CD4-positive, alpha-beta T cell (primary cell): ENCODE measurements at regions of chr19 and their contacts with region 1.

Region 1: DNA sequence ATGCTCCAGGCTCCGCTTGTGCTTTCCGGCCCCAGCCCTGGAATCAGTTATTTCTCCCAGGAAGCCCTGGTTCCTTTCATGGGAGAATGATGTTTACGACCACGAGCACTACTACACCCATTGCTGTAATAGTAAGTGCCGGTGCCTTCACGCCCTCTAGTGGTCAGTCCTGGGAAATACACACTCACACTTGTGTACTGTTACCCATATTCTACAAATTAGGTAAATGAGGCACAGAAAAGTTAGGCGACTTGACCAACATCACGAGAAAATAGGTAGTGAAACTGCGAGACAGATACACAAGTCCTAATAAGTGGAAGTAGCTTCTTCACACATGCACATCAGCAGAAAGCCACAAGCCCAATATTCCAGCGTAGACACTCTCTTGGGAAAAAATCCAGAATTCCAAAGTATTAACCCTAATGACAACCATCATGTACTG is 21.7 kb downstream of the CEACAM21 start:
- DNase-seq: peak; percentile 50 to 87 (median 68)
- ATAC-seq: peak; percentile 87
- H3K4me3 ChIP-seq: no peak overlapping the region
- H3K4me3 Mint-ChIP-seq: no peak overlapping the region
- H3K27ac ChIP-seq: no peak overlapping the region
- H3K27ac Mint-ChIP-seq: no peak overlapping the region
- H3K4me1 ChIP-seq: peaks cover 4% of the 10 kb centered on the region
- H3K4me1 Mint-ChIP-seq: peaks cover 12% of the 10 kb centered on the region
- H3K27me3 ChIP-seq: peaks cover 0 to 4% of the 10 kb centered on the region in 2 experiments
- H3K27me3 Mint-ChIP-seq: peaks cover 15% of the 10 kb centered on the region
- CTCF ChIP-seq: peak; percentile 94

Region 2: GRCh38 chr19:41206926-41207750 is 390.5 kb before region 1 on chr19:
- CTCF ChIA-PET with region 1: no interaction called
- POLR2A ChIA-PET with region 1: no interaction called
- intact Hi-C with region 1: loop called in 1 of 2 experiments (anchors 5 kb)
- DNase-seq: no peak
- ATAC-seq: no peak
- H3K4me3 ChIP-seq: no peak overlapping the region
- H3K4me3 Mint-ChIP-seq: no peak overlapping the region
- H3K27ac ChIP-seq: no peak overlapping the region
- H3K27ac Mint-ChIP-seq: peak overlapping the region; percentile 39
- H3K4me1 ChIP-seq: peaks cover 9% of the 10 kb centered on the region
- H3K4me1 Mint-ChIP-seq: no peaks in the 10 kb centered on the region
- H3K27me3 ChIP-seq: no peaks in the 10 kb centered on the region
- H3K27me3 Mint-ChIP-seq: no peaks in the 10 kb centered on the region
- CTCF ChIP-seq: no peak

Region 3: GRCh38 chr19:41397086-41398049 is 200.3 kb before region 1 on chr19 and contains the starts of genes BCKDHA and EXOSC5:
- CTCF ChIA-PET with region 1: no interaction called
- POLR2A ChIA-PET with region 1: no interaction called
- intact Hi-C with region 1: loop called in 1 of 2 experiments (anchors 1 kb)
- DNase-seq: peak; percentile 97 to 100 (median 99)
- ATAC-seq: peak; percentile 98
- H3K4me3 ChIP-seq: peak within 1 kb of the TSS; percentile 82
- H3K4me3 Mint-ChIP-seq: peak within 1 kb of the TSS; percentile 96
- H3K27ac ChIP-seq: peak within 1 kb of the TSS; percentile 91 to 99
- H3K27ac Mint-ChIP-seq: peak within 1 kb of the TSS; percentile 99
- H3K4me1 ChIP-seq: peaks cover 38% of the 10 kb centered on the region
- H3K4me1 Mint-ChIP-seq: peaks cover 57% of the 10 kb centered on the region
- H3K27me3 ChIP-seq: no peaks in the 10 kb centered on the region
- H3K27me3 Mint-ChIP-seq: no peaks in the 10 kb centered on the region
- CTCF ChIP-seq: no peak
- total RNA-seq, gene BCKDHA: 12.2 to 13.1 TPM
- total RNA-seq, gene EXOSC5: 6.5 to 7.5 TPM

Region 4: DNA sequence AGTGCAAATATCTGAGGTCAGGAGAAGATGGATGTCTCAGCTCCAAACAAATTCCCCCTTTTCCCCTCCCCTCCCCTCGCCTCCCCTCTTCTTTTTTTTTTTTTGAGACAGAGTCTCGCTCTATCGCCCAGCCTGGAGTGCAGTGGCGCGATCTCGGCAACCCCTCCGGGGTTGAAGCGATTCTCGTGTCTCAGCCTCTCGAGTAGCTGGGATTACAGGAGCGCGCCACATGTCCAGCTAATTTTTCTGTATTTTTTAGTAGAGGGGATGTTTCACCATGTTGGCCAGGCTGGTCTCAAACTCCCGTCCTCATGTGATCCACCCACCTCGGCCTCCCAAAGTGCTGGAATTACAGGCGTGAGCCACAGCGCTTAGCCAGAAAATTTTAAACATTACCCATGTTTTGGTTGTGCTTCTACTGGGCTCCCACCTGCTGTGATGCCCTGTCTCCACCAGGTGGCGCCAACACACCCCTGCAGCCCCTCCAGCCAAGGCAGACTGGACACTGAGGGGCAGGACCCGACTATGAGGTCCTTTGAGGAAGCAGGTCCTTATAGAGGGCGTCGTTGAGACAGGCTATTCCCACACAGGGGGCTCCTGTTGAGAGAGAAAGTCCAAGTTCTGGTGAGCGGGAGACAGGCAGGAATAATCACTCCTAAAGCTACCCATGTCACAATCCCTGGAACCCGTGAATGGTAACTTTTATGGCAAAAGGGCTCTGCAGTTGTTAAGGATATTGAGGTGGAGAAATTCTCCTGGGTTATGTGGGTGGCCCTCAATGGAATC is 148.3 kb before region 1 on chr19:
- CTCF ChIA-PET with region 1: interaction called, 10 read pairs
- POLR2A ChIA-PET with region 1: interaction called, 3 read pairs
- intact Hi-C with region 1: loop called (anchors 1 kb)
- DNase-seq: peak; percentile 45 to 83 (median 62)
- ATAC-seq: peak; percentile 93
- H3K4me3 ChIP-seq: peak overlapping the region; percentile 32
- H3K4me3 Mint-ChIP-seq: peak overlapping the region; percentile 73
- H3K27ac ChIP-seq: no peak overlapping the region
- H3K27ac Mint-ChIP-seq: no peak overlapping the region
- H3K4me1 ChIP-seq: peaks cover 20% of the 10 kb centered on the region
- H3K4me1 Mint-ChIP-seq: no peaks in the 10 kb centered on the region
- H3K27me3 ChIP-seq: peaks cover 4 to 8% of the 10 kb centered on the region in 2 experiments
- H3K27me3 Mint-ChIP-seq: peaks cover 23% of the 10 kb centered on the region
- CTCF ChIP-seq: peak; percentile 98

Region 5: GRCh38 chr19:41521931-41522555 is 75.6 kb before region 1 on chr19:
- CTCF ChIA-PET with region 1: interaction called, 3 read pairs
- POLR2A ChIA-PET with region 1: no interaction called
- intact Hi-C with region 1: loop called in 1 of 2 experiments (anchors 2 kb)
- DNase-seq: peak in 10 of 14 experiments; percentile 26 to 79 (median 50)
- ATAC-seq: peak; percentile 71
- H3K4me3 ChIP-seq: peak overlapping the region; percentile 52
- H3K4me3 Mint-ChIP-seq: peak overlapping the region; percentile 91
- H3K27ac ChIP-seq: peak overlapping the region; percentile 34 to 36
- H3K27ac Mint-ChIP-seq: peak overlapping the region; percentile 76
- H3K4me1 ChIP-seq: peaks cover 9% of the 10 kb centered on the region
- H3K4me1 Mint-ChIP-seq: peaks cover 26% of the 10 kb centered on the region
- H3K27me3 ChIP-seq: peaks cover 0 to 4% of the 10 kb centered on the region in 2 experiments
- H3K27me3 Mint-ChIP-seq: peaks cover 73% of the 10 kb centered on the region
- CTCF ChIP-seq: no peak

Region 6: DNA sequence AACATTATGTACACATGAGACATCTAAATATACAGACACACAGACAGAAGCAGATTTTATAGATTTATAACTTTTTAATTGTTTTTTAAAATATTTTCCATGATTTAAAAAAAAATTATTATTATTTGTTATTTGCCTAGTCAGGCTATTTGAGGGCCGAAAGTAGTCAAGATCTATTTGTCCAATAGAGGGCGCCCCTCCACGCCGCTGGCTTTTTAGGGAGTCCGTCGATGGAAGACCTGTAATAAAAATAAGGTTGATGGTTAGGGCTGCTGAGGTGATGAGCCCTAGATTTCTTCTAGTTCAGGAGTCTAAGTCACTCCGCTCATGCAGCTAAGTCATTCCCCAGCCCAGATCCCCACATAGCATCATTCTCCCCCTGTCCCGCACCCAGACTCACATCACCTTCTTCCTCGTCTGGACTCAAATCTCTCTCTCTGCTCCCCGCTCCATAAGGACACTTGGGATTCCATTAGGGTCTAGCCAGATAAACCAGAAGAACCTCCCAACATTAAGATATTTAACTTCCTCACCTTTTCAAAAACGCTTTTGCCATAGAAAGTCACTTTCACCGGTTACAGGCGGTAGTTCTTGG is 55.5 kb before region 1 on chr19:
- CTCF ChIA-PET with region 1: interaction called, 3 read pairs
- POLR2A ChIA-PET with region 1: no interaction called
- intact Hi-C with region 1: loop called in 1 of 2 experiments (anchors 2 kb)
- DNase-seq: peak; percentile 55 to 89 (median 78)
- ATAC-seq: no peak
- H3K4me3 ChIP-seq: no peak overlapping the region
- H3K4me3 Mint-ChIP-seq: peak overlapping the region; percentile 65
- H3K27ac ChIP-seq: no peak overlapping the region
- H3K27ac Mint-ChIP-seq: peak overlapping the region; percentile 66
- H3K4me1 ChIP-seq: peaks cover 46% of the 10 kb centered on the region
- H3K4me1 Mint-ChIP-seq: peaks cover 48% of the 10 kb centered on the region
- H3K27me3 ChIP-seq: no peaks in the 10 kb centered on the region
- H3K27me3 Mint-ChIP-seq: no peaks in the 10 kb centered on the region
- CTCF ChIP-seq: peak; percentile 92